CD14-positive monocyte (primary cell): ENCODE measurements at regions of chr14 and their contacts with region 1.

Region 1: DNA sequence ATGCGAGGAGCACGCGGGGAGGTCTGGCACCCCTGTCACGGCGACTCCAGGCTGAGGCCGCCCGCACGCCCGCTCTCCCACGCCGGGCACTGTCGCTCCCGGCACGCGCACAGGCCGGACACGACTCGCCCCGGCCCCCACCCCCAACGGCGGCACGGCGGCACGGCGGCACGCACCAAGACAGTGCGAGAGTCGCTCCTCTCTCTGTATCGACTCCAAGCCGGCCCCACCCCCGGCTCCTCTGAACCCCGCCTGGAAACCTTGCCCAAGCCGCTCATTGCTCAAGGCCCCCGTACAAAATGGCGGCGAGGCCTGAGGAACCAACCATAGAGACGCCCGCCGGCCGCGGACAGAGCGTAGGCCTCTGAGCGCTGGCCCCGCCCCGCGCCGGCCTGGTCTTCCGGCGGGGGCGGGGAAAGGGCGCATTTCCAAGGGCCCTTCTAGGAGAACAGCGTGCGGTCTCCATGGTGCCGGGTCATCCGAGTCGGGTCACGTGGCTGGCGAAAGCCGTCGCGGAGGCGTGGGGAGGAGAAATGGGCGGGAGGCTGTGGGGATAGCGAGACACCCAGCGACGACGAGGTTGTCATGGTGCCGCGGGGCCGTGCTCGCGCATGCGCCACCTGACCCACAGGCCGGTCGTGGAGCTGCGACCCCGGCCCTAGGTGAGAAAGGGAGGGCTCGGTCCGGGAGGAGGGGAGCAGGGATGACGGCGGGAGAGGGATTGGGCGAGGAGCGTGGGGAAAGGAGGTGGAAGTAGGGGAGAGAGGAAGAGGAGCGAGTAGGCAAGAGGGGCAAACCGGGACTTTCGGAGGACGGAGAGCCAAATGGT is at the start of gene CIPC:
- DNase-seq: peak; percentile 99 to 100 (median 99)
- H3K4me3 ChIP-seq: peak within 1 kb of the TSS; percentile 61 to 91 (median 64)
- H3K4me3 Mint-ChIP-seq: peak within 1 kb of the TSS; percentile 87 to 94
- H3K27ac ChIP-seq: peak within 1 kb of the TSS; percentile 90 to 96
- H3K27ac Mint-ChIP-seq: peak within 1 kb of the TSS; percentile 94 to 98 (median 97)
- H3K4me1 ChIP-seq: peaks cover 24 to 29% of the 10 kb centered on the region in 2 donors
- H3K4me1 Mint-ChIP-seq: peaks cover 28% of the 10 kb centered on the region
- H3K27me3 ChIP-seq: no peaks in the 10 kb centered on the region
- H3K27me3 Mint-ChIP-seq: peaks cover 0 to 2% (median 1%) of the 10 kb centered on the region in 3 donors
- CTCF ChIP-seq: no peak
- polyA plus RNA-seq, gene CIPC: 4.4 to 11.2 (median 7.0) TPM

Region 2: GRCh38 chr14:76710056-76711010 is 387.6 kb before region 1 on chr14:
- intact Hi-C with region 1: loop called in 1 of 2 experiments (anchors 5 kb)
- DNase-seq: peak; percentile 44 to 80 (median 53)
- H3K4me3 ChIP-seq: no peak overlapping the region
- H3K4me3 Mint-ChIP-seq: no peak overlapping the region
- H3K27ac ChIP-seq: no peak overlapping the region
- H3K27ac Mint-ChIP-seq: peak overlapping the region in 2 of 7 donors; percentile 8 to 46
- H3K4me1 ChIP-seq: no peaks in the 10 kb centered on the region
- H3K4me1 Mint-ChIP-seq: peaks cover 20% of the 10 kb centered on the region
- H3K27me3 ChIP-seq: no peaks in the 10 kb centered on the region
- H3K27me3 Mint-ChIP-seq: peaks cover 0 to 6% (median 3%) of the 10 kb centered on the region in 3 donors
- CTCF ChIP-seq: peak; percentile 76

Region 3: DNA sequence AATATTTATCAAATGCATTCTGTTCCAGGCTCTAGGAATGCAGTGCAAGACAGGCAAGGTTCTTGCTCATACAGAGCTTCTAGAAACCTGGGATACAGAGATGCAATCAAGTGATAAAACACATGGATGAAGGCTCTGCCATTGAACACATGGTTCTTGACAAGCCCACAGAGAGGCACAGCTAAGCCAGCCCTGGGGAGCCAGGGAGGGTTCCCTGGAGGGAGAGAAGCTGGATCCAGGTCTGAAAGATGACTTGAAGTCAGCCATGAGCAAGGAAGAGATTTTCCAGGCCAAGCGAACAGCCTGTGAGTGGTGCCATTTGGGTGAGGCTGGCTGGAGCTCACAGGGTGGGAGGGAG is 135.6 kb before region 1 on chr14:
- intact Hi-C with region 1: loop called in 1 of 2 experiments (anchors 5 kb)
- DNase-seq: no peak
- H3K4me3 ChIP-seq: peak overlapping the region in 2 of 3 experiments; percentile 43 to 70
- H3K4me3 Mint-ChIP-seq: peak overlapping the region; percentile 82 to 96
- H3K27ac ChIP-seq: peak overlapping the region; percentile 95 to 97
- H3K27ac Mint-ChIP-seq: peak overlapping the region; percentile 99 to 100 (median 99)
- H3K4me1 ChIP-seq: peaks cover 26 to 39% of the 10 kb centered on the region in 2 donors
- H3K4me1 Mint-ChIP-seq: peaks cover 54% of the 10 kb centered on the region
- H3K27me3 ChIP-seq: no peaks in the 10 kb centered on the region
- H3K27me3 Mint-ChIP-seq: peaks cover 0 to 6% (median 5%) of the 10 kb centered on the region in 3 donors
- CTCF ChIP-seq: no peak

Region 4: DNA sequence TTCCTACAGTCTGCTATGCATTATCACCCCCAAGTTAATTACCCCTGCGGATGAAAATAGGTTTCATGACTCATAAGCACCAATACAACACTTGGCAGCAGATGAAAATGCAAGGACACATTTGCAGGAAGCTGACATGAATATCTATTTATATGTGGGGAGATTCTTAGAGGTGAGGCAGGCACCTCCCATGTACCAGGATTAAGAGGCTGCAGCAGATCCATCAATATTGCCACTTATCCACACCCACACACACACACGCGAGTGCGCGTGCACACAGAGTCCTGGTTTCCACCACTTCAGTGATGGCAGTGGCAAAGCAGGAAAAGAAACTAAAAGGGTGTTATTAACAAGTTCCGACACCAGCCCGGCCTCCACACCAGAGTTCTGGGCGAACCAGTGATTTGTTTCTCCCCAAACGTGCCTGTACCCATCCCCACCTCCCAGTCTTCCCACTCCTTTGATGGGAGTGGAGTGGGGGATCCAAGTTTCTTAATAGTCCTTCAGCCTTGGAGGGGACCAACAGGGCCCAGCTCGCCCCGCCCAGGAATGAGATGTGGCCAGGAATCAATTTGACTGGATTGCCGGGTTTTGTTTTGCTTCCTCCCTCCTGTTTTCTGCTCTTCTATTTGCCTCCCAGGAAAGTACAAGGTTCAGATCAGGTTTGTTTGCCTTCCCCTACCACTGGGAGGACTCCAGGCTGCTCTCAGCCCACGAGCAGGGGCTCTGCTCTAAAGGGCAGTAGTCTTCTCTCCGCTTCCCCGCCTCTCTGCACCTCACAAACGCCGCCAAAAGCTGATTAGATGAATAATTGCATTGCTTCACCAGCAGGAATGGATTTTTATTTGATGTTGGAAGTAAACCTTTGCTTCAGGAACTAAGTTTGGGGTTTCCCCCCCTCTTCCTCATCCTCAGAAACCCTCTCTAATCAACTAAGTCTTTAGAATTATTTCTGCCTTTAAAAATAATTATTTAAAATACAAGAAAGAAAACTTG is 74.6 kb before region 1 on chr14:
- intact Hi-C with region 1: no loop called
- DNase-seq: no peak
- H3K4me3 ChIP-seq: no peak overlapping the region
- H3K4me3 Mint-ChIP-seq: no peak overlapping the region
- H3K27ac ChIP-seq: no peak overlapping the region
- H3K27ac Mint-ChIP-seq: peak overlapping the region in 3 of 7 donors; percentile 4 to 47 (median 22)
- H3K4me1 ChIP-seq: peaks cover 23 to 32% of the 10 kb centered on the region in 2 donors
- H3K4me1 Mint-ChIP-seq: peaks cover 29% of the 10 kb centered on the region
- H3K27me3 ChIP-seq: no peaks in the 10 kb centered on the region
- H3K27me3 Mint-ChIP-seq: no peaks in the 10 kb centered on the region
- CTCF ChIP-seq: no peak